Right cardiac atrium (tissue), 5 donors: ENCODE measurements at regions of chr2 and their contacts with region 1.

Region 1: DNA sequence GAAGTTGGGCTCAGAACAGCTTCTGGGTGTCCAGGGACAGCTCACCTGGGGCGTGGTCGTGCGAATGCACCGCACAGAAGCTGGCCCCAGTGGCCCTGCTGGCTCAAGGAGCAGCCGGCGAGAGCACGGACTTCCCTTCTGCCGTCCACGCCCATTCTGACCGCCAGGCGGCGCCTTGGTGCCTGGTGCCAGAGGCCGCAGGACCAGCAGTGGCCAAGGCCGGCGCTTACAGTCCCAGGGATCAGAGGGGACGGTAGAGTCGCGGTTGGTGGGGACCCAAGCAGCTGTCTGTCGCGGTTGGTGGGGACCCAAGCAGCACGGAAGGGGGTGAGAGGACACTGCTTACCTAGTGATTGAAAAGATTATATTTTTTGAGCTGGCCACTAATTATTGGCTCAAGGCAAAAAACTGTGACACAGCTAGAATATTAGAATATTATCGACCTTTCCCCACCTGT is 25.7 kb downstream of the NPPC start:
- DNase-seq: peak; percentile 81 to 91 (median 89)
- ATAC-seq: peak; percentile 71 to 88
- H3K4me3 ChIP-seq: no peak overlapping the region
- H3K27ac ChIP-seq: no peak overlapping the region
- H3K4me1 ChIP-seq: no peaks in the 10 kb centered on the region
- H3K27me3 ChIP-seq: no peaks in the 10 kb centered on the region

Region 2: DNA sequence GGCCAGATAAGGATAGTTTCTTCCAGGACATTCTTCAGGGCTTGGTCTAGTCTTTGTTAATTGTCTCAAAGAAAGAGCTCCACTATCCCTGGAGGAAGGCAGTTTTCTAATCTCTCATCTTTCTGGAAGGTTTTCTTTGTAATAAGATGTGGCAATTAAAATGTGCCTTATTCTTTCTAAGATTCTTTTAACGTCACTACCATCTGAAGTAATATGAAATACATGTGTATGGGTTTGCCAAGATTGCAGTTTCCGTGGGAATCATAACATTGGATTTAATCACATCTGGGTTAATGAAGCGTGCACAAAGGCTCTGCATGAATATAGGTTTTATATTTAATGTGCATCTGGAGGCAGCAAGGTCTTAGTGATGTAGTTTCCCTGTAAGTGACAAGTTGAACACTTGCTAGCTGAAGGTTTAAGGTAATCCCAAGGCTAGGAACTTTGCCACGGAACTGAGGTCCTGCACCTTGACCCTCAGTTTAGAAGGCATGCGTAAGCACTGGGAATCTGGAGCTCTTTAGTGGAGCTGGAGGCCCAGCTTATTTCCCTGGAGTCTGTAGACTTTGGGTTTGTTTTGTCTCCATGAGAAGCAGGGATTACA is 86.7 kb after region 1 on chr2:
- intact Hi-C with region 1: no loop called
- DNase-seq: peak in 1 of 3 donors; percentile 41
- ATAC-seq: peak; percentile 71 to 75
- H3K4me3 ChIP-seq: no peak overlapping the region
- H3K27ac ChIP-seq: no peak overlapping the region
- H3K4me1 ChIP-seq: no peaks in the 10 kb centered on the region
- H3K27me3 ChIP-seq: no peaks in the 10 kb centered on the region

Region 3: GRCh38 chr2:232438951-232439757 is 538.6 kb after region 1 on chr2:
- intact Hi-C with region 1: loop called in 3 of 4 experiments (anchors 5 kb)
- DNase-seq: peak in 1 of 3 donors; percentile 60
- ATAC-seq: peak; percentile 53 to 59
- H3K4me3 ChIP-seq: no peak overlapping the region
- H3K27ac ChIP-seq: no peak overlapping the region
- H3K4me1 ChIP-seq: no peaks in the 10 kb centered on the region
- H3K27me3 ChIP-seq: no peaks in the 10 kb centered on the region

Region 4: GRCh38 chr2:232444409-232445148 is 544.1 kb after region 1 on chr2:
- intact Hi-C with region 1: loop called in 3 of 4 experiments (anchors 5 kb)
- DNase-seq: peak in 2 of 3 donors; percentile 42 to 66
- ATAC-seq: no peak
- H3K4me3 ChIP-seq: no peak overlapping the region
- H3K27ac ChIP-seq: no peak overlapping the region
- H3K4me1 ChIP-seq: no peaks in the 10 kb centered on the region
- H3K27me3 ChIP-seq: no peaks in the 10 kb centered on the region